ENCODE measurements at regions of chr1 and their contacts with region 1.

Region 1: DNA sequence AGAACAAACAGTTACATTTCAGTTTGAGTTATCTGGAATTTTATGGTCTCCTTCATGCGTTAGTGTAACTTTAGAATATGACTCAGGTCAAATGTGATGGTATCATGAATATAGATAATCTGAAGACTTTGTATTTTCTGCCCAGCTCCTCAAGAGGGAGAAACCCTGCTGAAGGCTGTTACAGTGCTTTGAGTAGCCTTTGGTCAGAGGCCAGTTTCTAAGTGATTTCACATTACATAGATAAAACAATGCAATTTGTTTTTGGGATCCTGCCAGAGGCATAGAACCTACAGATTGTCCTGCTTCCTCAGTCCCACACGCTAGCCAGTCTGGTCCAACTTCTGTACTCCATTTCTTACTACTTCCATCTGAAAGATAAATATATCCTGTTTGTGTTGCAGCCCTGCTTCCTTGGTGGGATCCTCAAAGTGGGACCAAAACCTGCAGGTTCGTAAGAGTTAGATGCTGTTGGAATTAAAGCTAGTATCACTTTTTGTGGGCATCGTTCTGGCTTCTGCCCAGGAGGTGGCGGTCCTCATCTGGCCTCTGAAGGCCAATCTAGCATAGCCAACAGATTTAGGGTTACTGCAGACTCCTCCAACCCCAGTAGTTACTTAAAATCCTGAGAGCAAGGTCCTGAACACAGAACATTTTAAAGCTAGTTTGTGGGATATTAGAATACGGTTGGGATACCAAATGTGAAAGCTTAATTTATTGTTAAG is 645.8 kb upstream of the USP24 start:
- DNase-seq: no peak
- ATAC-seq: no peak
- H3K4me3 ChIP-seq: no peak overlapping the region
- H3K27ac ChIP-seq: no peak overlapping the region
- H3K4me1 ChIP-seq: no peaks in the 10 kb centered on the region
- H3K27me3 ChIP-seq: no peaks in the 10 kb centered on the region
- CTCF ChIP-seq: peak; percentile 41
- EP300 ChIP-seq: no peak
- POLR2A ChIP-seq: no peak
- RAD21 ChIP-seq: no peak

Region 2: DNA sequence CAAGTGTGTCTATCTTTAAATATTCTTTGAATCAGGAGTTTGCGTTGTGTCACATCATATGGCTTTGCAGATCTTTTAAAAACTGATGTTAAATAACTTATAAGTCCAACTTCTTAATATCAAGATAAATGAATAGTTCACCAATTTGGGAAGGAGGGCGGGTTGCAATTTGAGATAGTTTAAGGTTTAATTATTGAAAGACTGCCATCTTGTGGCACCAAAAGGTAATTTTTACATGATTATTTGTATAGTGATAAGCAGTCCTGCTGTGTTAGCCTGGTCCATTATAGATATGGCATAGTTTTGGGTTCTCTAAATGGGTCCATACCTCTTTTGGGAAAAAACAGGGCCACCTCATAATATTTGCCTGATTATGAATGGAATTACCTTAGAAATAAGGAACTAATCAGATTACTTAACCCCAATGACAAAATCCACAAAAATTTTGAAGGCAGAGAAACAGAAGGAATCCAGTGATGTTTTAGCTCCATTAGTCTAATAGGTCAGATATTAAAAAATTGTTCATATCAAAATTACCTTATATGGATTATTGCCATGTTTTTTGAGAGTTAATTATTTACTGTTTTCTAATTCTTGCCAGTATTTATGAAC is 848.4 kb after region 1 on chr1:
- CTCF ChIA-PET with region 1: no interaction called
- POLR2A ChIA-PET with region 1: no interaction called
- in situ Hi-C with region 1: no loop called
- intact Hi-C with region 1: loop called (anchors 2 kb)
- DNase-seq: peak; percentile 56
- ATAC-seq: peak; percentile 76
- H3K4me3 ChIP-seq: no peak overlapping the region
- H3K27ac ChIP-seq: no peak overlapping the region
- H3K4me1 ChIP-seq: no peaks in the 10 kb centered on the region
- H3K27me3 ChIP-seq: no peaks in the 10 kb centered on the region
- CTCF ChIP-seq: peak; percentile 65
- EP300 ChIP-seq: no peak
- POLR2A ChIP-seq: no peak
- RAD21 ChIP-seq: peak; percentile 28; the same call in 1 of the 2 replicates